Adrenal gland (tissue), 19 donors: ENCODE measurements at regions of chr9 and their contacts with region 1.

Region 1: DNA sequence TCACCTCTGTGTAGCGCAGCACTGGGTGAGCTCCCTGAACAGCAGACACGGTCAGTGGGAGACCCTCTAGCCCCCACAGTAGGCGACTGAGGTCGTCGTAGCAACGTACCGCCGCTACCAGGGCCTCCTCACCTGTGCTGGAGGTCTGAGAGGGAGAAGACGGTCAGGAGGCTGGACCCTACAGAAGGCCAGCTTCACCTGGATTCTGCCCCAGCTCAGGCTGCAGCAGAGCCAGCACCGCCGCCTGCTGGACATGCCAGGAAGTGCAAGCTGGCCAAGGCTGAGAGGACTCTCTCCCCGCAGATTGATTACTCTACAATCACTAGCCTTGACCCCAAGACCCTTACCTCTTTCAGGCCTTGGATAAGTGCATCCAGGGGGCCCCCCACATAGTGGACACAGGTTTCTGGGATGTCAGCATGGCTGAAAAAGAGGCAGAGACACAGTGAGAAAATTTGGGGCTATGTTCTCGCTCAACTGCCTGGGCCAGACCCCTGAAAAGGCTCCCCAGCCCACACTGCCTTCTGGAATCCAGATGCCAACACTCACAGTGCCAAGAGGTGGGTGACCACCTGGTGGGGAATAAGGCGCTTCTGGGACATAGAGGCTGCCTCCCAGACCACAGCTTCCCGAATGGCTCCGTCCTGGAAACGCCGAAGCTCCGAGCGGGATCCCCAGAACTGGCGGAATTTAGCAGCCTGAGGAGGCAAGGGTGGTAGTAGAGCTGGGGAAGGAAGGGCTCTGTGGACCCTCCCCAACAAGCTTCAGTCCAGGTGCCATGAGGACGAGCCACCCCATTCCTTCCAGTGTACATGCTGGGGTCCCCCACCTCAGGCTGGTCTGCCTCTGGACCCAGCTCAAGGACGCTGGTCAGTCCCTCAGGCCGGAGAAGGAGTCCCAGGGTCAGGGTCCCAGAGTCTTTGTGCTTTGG is 6.9 kb downstream of the NOL6 start:
- DNase-seq: peak; percentile 43 to 82 (median 68)
- H3K4me3 ChIP-seq: no peak overlapping the region
- H3K27ac ChIP-seq: no peak overlapping the region
- H3K4me1 ChIP-seq: no peaks in the 10 kb centered on the region
- H3K27me3 ChIP-seq: no peaks in the 10 kb centered on the region
- CTCF ChIP-seq: peak; percentile 85 to 89 (median 88)
- POLR2A ChIP-seq: no peak

Region 2: GRCh38 chr9:33290247-33291030 is 176.4 kb before region 1 on chr9 and contains the start of gene NFX1:
- intact Hi-C with region 1: loop called in 1 of 2 experiments (anchors 10 kb)
- DNase-seq: peak; percentile 97 to 99 (median 98)
- H3K4me3 ChIP-seq: peak within 1 kb of the TSS; percentile 66 to 95 (median 80)
- H3K27ac ChIP-seq: peak within 1 kb of the TSS; percentile 97 to 100 (median 99)
- H3K4me1 ChIP-seq: peaks cover 13 to 36% of the 10 kb centered on the region in 2 donors
- H3K27me3 ChIP-seq: no peaks in the 10 kb centered on the region
- CTCF ChIP-seq: no peak
- POLR2A ChIP-seq: peak; percentile 86 to 97
- total RNA-seq, gene NFX1: 20.8 to 44.4 (median 31.6) TPM

Region 3: DNA sequence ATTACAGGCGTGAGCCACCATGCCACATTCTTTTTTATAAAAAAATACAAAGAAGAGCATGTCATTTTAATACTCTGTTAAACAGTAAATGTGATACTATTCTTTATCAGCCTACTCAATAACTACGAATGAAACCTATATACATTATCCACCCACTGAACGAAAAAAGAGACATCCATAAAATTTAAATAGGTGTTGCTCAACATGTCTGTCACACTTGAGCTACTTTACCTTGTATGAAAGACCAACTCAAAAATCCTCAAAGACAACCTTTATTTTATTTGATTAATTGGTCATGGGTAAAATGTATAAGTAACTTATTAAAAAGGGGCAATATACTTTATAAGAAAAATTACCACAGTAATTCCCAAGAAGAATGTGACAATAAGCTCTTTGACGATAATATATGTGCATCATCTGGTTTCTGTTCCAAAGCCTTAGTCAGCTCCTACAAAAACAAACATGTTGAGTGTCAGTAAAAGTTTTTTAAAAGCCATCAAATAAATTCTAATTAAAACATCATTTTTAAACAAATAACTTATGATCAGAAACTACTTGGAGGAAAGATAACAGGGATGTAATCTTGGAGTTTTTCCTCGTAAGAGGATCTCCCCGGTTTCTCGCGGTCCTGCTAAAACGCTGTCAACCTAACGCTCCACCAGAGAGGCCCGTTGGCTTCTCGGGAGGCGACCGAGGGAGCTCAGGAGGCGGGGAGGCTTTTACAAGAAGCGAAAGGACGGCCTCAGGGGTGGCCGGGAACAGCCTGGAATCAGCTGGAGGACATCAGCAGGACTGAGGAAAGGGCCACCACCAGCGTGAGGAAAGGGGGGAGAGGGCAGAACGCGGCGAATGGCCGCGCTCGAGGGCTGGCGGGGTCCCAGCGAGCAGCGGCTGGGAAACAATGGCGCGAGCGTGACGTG is 43.7 kb after region 1 on chr9:
- intact Hi-C with region 1: no loop called
- DNase-seq: peak; percentile 60 to 73 (median 65)
- H3K4me3 ChIP-seq: peak overlapping the region in 3 of 4 donors; percentile 72 to 94 (median 74)
- H3K27ac ChIP-seq: peak overlapping the region; percentile 48 to 90 (median 85)
- H3K4me1 ChIP-seq: no peaks in the 10 kb centered on the region
- H3K27me3 ChIP-seq: no peaks in the 10 kb centered on the region
- CTCF ChIP-seq: no peak
- POLR2A ChIP-seq: peak; percentile 31 to 61

Region 4: DNA sequence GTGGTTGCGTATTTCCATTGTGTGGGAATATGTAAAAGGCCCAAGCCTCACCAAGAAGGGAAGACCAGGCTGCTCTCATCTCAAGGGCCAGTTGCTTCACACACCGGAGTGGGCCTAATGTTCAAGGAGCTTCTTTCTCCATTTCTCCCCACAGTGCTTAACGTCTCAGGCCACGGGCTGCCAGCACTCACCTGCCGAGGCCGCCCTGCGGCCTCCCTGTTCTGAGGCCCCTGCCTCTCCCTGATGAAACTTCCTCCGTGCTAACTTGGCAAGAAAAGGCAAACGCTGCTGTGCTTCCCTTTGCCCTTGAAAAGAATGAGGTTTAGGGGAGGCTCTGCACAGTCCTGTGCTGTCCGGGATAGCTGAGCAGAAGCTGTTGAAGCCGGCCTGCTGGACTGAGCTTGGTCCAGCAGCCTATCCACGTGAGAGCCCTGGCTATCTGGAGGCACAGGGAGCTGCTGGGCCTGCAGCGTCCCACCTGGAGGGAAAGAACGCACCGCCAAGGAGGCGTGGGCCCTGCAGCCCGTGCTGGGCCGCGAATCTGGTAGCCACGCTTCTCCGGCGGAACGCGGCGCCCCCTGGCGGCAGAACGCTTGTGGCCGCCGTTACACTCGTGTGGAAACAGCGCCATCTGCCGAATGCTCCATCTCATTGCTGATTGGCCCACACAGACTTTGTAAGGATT is 255.0 kb after region 1 on chr9:
- intact Hi-C with region 1: no loop called
- DNase-seq: peak; percentile 69 to 93 (median 86)
- H3K4me3 ChIP-seq: no peak overlapping the region
- H3K27ac ChIP-seq: no peak overlapping the region
- H3K4me1 ChIP-seq: peaks cover 0 to 4% of the 10 kb centered on the region in 2 donors
- H3K27me3 ChIP-seq: no peaks in the 10 kb centered on the region
- CTCF ChIP-seq: peak; percentile 100
- POLR2A ChIP-seq: peak in 1 of 2 donors; percentile 39